Activated naive CD4-positive, alpha-beta T cell treated with anti-CD3 and anti-CD28 coated beads for 36 hours (primary cell): ENCODE measurements at regions of chr17 and their contacts with region 1.

Region 1: DNA sequence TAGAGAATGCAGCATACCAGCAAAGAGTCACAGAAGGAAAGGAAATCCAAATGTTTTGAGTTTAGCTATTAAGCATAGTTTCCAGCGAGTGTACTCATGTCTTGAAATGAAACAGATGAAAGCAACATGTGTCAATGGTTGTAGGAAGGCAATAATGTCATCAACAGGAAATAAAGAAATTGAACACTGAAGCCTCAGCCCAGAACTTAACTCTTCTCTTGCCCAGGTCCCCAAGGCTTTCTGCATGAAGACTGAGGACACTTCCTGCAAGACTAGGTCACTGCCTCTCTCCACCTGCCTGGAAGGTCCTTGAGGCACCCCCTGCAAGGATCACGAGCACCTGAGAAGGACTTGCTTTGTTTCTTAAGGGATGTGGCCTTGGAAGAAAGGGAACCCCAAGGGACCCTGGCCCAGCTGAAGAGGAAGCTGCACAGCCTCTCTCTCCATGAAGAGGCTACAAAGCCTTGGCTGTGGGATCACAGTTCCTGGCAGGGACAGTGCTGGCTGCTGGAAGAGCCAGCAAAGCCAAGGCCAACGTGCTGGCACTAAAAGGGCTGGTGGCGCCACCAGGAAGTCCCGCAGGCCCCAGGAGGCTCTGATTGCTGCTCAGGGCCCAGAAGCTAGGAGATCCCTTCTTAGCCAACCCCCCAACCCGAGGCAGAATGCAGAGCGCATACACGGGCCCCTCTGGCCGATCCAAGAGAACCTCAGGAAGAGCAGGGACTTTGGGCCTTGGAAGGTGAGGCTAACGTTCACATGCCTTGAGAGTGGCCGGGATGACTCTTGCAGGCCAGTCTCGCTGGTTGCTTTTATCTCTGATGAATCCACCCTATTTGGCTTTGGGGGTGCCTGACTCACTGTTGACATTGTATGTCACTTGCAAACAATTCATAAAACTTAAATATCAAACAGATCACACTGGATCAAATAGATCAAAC is 23.4 kb upstream of the AXIN2 start:
- DNase-seq: peak; percentile 18
- H3K4me3 Mint-ChIP-seq: no peak overlapping the region
- H3K27ac Mint-ChIP-seq: peak overlapping the region; percentile 51
- H3K4me1 Mint-ChIP-seq: peaks cover 47% of the 10 kb centered on the region
- H3K27me3 Mint-ChIP-seq: no peaks in the 10 kb centered on the region

Region 2: DNA sequence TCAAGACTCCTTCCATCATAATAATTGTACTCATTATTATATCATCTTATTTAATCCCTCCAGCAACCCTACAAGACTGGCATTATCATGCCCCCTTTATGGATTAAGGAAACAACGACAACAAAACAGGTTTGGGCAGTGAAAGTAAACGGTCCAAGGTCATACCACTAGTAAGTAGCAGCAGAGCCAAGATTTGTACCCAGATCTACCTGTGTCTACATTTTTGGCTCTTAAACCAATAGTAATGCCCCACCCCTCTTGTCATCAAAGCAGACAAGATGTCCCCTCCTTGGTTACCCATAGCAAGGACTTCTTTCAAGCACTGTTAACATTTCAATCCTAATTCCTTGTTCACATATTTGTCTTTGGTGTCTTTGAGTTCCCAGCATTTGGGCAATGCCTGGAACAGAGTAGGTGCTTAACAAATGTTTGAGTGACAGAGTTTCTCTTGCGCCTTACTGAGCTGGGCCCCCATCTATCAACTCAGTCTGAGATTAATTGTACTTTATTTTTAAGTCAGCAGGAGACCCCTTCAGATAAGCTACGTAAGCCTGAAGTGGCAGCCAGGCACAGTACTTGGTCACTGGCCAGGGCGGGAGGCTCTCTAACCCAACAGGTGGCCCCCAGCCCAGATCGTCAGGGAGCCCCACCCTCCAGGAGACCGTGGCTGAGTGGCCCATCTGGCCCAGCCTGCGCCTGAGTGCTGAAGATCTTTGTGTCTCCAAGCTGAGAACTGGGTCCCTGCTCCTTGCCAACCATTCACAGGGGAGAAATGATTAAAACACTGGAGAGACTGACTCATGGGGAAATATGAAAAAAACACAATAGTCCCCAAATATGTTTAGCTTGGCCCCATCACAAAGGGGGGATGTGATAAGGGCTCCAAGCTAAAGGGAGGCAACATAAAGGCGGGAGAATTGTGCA is 99.2 kb before region 1 on chr17:
- CTCF ChIA-PET with region 1: no interaction called
- intact Hi-C with region 1: no loop called
- DNase-seq: no peak
- H3K4me3 Mint-ChIP-seq: no peak overlapping the region
- H3K27ac Mint-ChIP-seq: no peak overlapping the region
- H3K4me1 Mint-ChIP-seq: no peaks in the 10 kb centered on the region
- H3K27me3 Mint-ChIP-seq: no peaks in the 10 kb centered on the region

Region 3: GRCh38 chr17:65514082-65514481 is 70.8 kb before region 1 on chr17:
- CTCF ChIA-PET with region 1: no interaction called
- intact Hi-C with region 1: loop called (anchors 2 kb)
- DNase-seq: peak; percentile 48
- H3K4me3 Mint-ChIP-seq: no peak overlapping the region
- H3K27ac Mint-ChIP-seq: no peak overlapping the region
- H3K4me1 Mint-ChIP-seq: peaks cover 9% of the 10 kb centered on the region
- H3K27me3 Mint-ChIP-seq: no peaks in the 10 kb centered on the region

Region 4: DNA sequence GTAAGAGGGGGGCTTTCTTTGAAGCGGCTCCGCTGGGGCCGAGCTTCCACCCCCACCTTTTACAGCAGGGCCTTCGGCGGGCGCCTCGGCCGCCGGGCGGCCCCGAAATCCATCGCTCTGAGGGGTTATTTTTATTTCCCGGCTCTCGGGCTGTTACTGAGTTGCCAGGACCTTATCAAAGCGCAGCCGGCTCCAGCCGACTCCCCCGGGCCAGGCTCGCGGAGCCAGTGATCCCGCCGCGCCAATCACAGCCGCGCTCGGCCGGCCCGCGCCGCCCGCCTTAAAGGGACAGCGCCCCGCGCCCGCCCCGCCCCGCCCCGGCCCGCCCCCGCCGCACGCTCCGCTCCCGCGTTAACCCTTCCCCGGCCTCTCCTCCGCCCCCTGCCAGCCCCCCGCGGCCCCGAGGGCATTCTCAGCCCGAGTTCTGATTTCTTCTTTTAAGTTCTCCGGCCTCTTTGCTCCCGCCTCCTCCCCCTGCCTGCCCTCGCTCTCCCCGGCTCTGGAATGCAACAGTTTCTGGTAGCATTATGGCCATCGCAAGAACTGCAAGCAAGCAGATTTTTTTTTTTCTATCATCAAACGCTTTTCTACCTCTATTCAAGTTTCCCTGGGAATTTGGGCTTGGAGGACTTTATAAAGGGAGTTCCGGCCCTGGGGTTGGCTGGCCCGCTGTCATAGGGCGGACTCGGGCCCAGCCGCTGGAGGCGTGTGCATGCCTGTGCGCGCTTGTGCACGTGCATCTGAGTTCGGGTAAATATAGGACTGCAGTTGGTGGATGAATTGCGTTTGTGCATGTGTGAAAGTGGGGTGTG is 23.3 kb before region 1 on chr17 and contains the start of gene AXIN2:
- CTCF ChIA-PET with region 1: interaction called, 12 read pairs
- intact Hi-C with region 1: loop called (anchors 2 kb)
- DNase-seq: peak; percentile 87
- H3K4me3 Mint-ChIP-seq: peak within 1 kb of the TSS; percentile 74
- H3K27ac Mint-ChIP-seq: peak within 1 kb of the TSS; percentile 59
- H3K4me1 Mint-ChIP-seq: peaks cover 22% of the 10 kb centered on the region
- H3K27me3 Mint-ChIP-seq: peaks cover 2% of the 10 kb centered on the region
- total RNA-seq, gene AXIN2: 2.3 to 2.5 TPM

Region 5: GRCh38 chr17:65742403-65743307 is 157.8 kb after region 1 on chr17:
- CTCF ChIA-PET with region 1: no interaction called
- intact Hi-C with region 1: loop called (anchors 5 kb)
- DNase-seq: peak; percentile 14
- H3K4me3 Mint-ChIP-seq: no peak overlapping the region
- H3K27ac Mint-ChIP-seq: peak overlapping the region; percentile 39
- H3K4me1 Mint-ChIP-seq: peaks cover 22% of the 10 kb centered on the region
- H3K27me3 Mint-ChIP-seq: no peaks in the 10 kb centered on the region

Region 6: DNA sequence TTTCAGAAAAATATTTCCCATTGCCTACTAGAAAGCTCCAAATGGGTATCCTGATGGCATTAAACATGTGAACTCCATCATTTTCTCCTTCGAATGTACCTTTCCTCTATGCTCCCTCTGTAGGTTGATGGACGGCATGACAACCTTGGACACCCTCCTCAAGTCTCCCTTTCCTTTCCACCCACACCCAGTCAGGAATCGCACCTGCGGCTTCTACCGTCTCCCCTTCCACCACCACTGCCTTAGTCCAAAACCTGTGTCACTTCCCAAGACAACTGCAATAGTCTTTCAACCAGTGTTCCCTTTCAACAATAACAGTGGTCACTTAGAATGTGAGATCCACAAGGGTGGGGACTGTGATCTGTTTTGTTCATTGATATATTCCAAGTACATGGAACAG is 209.7 kb after region 1 on chr17:
- CTCF ChIA-PET with region 1: no interaction called
- intact Hi-C with region 1: loop called (anchors 1 kb)
- DNase-seq: no peak
- H3K4me3 Mint-ChIP-seq: no peak overlapping the region
- H3K27ac Mint-ChIP-seq: no peak overlapping the region
- H3K4me1 Mint-ChIP-seq: peaks cover 12% of the 10 kb centered on the region
- H3K27me3 Mint-ChIP-seq: peaks cover 2% of the 10 kb centered on the region

Region 7: DNA sequence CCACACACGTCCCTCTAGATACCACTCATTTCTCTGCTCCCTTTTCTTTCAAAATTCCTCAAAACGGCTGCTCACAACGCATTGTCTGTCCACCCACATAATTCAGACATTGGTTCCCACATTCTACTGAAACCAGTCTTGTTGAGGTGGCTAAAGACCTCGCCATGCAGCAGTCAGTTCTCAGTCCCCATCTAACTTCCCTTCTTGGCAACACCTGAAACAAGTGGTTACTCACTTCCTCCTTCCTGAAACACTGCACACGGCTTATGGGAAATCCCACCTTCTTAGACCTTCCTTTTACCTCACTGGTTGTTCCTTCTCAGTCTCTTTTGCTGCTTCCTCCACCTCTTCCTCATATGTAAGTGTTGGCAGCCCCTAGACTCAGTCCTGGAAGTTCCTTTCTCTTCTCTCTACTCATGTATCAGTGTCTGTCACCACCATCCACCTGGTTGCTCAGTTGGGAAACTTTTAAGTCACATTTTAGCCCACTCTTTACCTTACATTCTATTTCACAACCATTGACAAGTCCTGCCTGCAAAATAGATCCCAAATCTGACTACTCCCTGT is 330.0 kb after region 1 on chr17:
- CTCF ChIA-PET with region 1: no interaction called
- intact Hi-C with region 1: loop called (anchors 2 kb)
- DNase-seq: peak; percentile 72
- H3K4me3 Mint-ChIP-seq: no peak overlapping the region
- H3K27ac Mint-ChIP-seq: peak overlapping the region; percentile 71
- H3K4me1 Mint-ChIP-seq: peaks cover 17% of the 10 kb centered on the region
- H3K27me3 Mint-ChIP-seq: no peaks in the 10 kb centered on the region